Activated CD4-positive, alpha-beta T cell treated with anti-CD3 and anti-CD28 coated beads for 36 hours (primary cell): ENCODE measurements at regions of chr11 and their contacts with region 1.

Region 1: DNA sequence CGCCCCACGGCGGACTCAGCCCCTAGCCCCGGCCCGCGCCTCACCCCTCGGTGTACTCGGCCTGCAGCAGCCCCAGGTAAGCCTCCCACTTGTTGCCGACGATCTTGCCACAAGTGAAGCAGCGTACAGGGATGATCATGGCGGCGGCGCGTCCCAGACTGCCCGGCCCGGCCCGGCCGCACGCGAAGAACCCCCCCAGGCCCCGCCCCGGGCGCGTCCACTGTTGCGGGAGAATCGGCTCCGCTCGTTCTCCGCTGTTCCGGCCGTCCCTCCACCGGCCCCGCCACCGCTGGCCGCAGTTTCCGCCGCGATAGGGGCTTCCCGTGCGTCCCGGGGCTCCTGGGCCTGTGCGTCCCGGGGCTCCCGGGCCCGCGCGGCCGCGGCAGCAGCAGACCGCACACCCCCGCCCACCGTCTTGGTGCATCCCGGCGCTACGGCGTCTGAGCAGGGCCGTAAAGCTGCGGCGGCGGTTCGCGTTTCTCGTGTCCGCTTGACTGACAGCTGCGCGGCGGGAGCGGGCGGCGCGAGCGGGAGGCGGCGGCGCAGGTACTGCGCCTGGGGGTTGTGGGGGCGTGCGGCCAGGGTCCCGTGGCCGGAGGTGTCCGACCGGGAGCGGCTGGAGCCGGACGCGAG is at the starts of genes POLR2L and TSPAN4:
- DNase-seq: peak; percentile 94
- ATAC-seq: peak; percentile 80
- H3K4me3 Mint-ChIP-seq: peak within 1 kb of the TSS; percentile 84
- H3K27ac Mint-ChIP-seq: peak within 1 kb of the TSS; percentile 87
- H3K4me1 Mint-ChIP-seq: peaks cover 22% of the 10 kb centered on the region
- H3K27me3 Mint-ChIP-seq: peaks cover 4% of the 10 kb centered on the region
- total RNA-seq, gene POLR2L: 74.6 to 79.4 TPM
- total RNA-seq, gene TSPAN4: 5.2 to 6.0 TPM

Region 2: DNA sequence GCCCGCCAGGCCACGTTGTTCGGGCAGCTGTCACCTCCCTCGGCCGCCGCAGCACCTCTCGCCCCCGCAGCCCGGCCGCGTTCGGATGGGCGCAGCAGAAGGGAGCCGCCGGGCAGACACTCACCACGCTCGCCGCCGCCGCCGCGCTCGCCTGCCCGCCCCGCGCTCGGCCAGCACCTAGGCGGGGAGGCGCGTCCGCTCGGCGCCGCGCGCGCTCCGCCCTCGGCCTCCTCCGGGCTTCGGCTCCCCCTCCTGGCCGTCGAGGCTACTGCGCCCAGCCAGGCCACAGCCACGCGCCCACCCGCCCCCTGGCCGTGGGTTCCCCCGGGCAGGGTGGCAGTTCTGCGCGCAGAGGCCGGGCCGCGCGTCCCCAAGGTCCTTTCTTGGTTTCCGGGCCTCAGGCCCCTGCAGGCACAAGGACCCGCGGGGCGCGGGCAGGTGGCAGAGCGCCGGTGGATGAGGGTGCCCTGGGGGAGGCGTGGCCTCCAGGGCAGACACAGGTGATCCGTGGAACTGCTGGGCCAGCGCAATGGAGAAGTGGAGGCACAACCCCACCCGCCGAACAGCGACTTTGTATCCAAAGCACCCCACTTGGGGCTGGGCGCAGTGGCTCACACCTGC is 44.3 kb before region 1 on chr11 and contains the start of gene SLC25A22:
- CTCF ChIA-PET with region 1: no interaction called
- POLR2A ChIA-PET with region 1: no interaction called
- intact Hi-C with region 1: loop called in 1 of 2 experiments (anchors 1 kb)
- DNase-seq: peak; percentile 92
- ATAC-seq: peak; percentile 63
- H3K4me3 Mint-ChIP-seq: peak within 1 kb of the TSS; percentile 79
- H3K27ac Mint-ChIP-seq: peak within 1 kb of the TSS; percentile 67
- H3K4me1 Mint-ChIP-seq: peaks cover 13% of the 10 kb centered on the region
- H3K27me3 Mint-ChIP-seq: no peaks in the 10 kb centered on the region
- total RNA-seq, gene SLC25A22: 33.9 to 36.6 TPM

Region 3: GRCh38 chr11:819129-819931 is 23.2 kb before region 1 on chr11:
- CTCF ChIA-PET with region 1: interaction called, 3 read pairs
- POLR2A ChIA-PET with region 1: interaction called, 4 read pairs
- intact Hi-C with region 1: loop called in 1 of 2 experiments (anchors 1 kb)
- DNase-seq: peak; percentile 95
- ATAC-seq: peak; percentile 82
- H3K4me3 Mint-ChIP-seq: peak overlapping the region; percentile 72
- H3K27ac Mint-ChIP-seq: no peak overlapping the region
- H3K4me1 Mint-ChIP-seq: peaks cover 11% of the 10 kb centered on the region
- H3K27me3 Mint-ChIP-seq: no peaks in the 10 kb centered on the region

Region 4: DNA sequence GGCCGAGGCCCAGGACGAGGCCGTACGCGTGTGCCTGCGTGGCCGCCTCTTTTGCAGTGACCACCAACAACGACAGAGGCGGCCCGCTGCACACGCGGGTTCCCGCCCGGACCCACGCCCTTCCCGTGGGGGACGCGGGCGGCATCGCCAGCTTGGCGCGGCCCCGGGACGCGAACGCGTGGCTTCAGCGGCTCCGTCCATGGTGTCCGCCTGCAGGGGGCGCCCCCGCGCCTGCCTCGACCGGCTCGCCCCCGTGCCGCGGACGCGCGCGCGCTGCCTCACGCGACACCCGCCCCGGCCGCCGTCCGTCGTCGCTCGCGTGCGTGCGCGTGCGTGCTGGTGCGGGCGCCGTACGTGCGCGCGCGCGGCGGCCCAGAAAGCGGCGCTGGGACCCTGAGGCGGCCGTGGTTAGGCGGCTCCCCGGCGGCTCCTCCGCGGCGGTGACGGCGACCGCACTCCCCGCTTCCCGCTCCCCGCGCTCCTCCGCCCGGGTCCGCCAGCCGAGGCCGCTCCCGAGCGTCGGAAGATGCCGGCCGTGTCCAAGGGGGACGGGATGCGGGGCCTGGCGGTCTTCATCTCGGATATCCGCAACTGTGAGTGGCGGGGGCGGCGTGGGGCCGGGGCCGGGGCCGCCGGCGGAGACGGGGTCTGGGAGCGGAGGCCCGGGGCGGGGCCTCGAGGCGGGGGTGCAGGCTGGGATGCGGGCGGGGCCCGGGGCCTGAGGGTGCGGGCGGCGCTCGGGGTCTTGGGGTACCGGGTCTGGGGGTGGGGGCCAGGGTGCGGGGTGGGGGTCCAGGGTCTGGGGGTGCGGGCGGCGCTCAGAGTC is 83.2 kb after region 1 on chr11 and contains the start of gene AP2A2:
- CTCF ChIA-PET with region 1: interaction called, 3 read pairs
- POLR2A ChIA-PET with region 1: no interaction called
- intact Hi-C with region 1: loop called in 1 of 2 experiments (anchors 1 kb)
- DNase-seq: peak; percentile 96
- ATAC-seq: peak; percentile 65
- H3K4me3 Mint-ChIP-seq: peak within 1 kb of the TSS; percentile 80
- H3K27ac Mint-ChIP-seq: peak within 1 kb of the TSS; percentile 86
- H3K4me1 Mint-ChIP-seq: peaks cover 33% of the 10 kb centered on the region
- H3K27me3 Mint-ChIP-seq: no peaks in the 10 kb centered on the region
- total RNA-seq, gene AP2A2: 43.5 to 71.6 TPM

Region 5: DNA sequence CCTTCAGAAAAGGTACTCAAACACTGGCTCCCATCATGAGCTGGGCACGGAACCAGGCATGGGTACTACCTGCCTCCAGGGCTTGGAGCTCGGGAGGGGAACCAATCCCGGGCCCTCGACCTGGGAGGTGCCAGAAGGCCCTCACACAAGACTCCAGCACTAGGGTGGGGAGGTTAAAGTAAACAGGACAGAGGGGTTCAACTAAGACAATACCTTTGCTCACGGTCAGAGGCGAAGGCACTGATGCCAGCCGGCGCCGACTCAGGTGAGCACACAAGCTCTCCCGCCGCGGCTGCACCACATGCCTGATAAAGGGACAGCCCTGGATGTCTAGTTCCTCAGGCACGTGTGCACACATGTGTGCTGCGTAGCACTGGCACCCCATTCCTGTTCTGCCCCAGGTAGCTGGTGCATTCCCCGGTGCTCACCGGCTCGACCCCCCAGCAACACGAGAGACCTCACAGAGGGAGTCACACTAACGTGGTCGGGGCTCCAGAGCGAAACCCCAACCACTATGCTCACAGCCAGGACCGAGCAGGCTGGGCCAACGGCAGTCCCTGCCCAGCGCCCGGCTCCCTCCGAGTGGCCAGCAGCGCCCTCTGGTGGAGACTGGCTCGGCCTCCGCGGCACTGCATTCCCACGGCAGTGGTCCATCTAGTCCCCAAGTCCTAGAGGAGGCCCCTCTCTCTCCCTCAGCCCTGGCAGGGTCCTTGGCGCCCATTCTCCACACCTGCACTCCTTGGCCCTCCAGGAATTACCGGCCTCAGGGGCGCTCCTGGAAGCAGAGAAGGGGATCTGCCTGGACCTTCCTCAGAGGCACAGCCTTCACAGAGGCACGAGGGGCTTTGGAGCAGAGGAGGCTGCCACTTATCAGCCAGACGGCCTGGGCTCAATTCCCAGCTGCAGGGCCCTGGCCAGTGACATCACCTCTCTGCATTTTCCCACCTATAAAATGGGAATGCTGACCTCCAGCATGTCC is 672.9 kb after region 1 on chr11:
- CTCF ChIA-PET with region 1: no interaction called
- POLR2A ChIA-PET with region 1: no interaction called
- intact Hi-C with region 1: loop called in 1 of 2 experiments (anchors 10 kb)
- DNase-seq: peak; percentile 88
- ATAC-seq: peak; percentile 86
- H3K4me3 Mint-ChIP-seq: no peak overlapping the region
- H3K27ac Mint-ChIP-seq: no peak overlapping the region
- H3K4me1 Mint-ChIP-seq: peaks cover 44% of the 10 kb centered on the region
- H3K27me3 Mint-ChIP-seq: no peaks in the 10 kb centered on the region